CD4-positive, alpha-beta T cell (primary cell): ENCODE measurements at regions of chr9 and their contacts with region 1.

Region 1: DNA sequence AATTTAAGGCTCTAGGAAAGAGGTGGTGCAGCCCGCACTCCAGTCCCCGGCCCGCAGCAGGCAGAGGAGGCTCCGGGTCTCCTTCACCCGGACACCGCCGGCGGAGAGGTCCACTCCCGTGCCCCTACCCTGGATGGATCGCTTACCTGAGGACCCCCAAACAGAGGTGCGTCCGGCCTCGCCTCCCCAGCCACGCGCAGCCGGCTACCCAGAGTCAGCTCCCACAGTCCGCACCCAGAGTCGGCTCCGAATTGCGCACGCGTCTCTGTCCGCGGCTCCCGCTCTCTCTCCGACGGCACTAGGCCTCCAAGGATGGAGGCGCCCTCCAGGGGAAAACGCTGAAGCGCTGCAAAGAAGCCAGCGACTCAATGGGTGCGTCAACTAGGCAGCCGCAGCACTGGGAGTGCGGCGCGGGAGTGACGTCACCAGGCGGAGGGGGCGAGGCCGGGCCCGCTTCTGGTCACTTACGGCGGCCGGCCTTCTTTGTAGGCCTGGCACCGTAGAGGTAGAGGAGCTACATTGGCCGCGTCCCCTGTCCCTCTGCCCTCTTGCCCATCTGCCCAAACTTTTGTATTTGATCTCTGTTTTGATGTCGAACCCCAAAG is at the start of gene ELP1:
- DNase-seq: peak; percentile 83 to 97 (median 90)
- ATAC-seq: peak; percentile 88
- H3K4me3 ChIP-seq: peak within 1 kb of the TSS; percentile 97
- H3K4me3 Mint-ChIP-seq: peak within 1 kb of the TSS; percentile 99
- H3K27ac ChIP-seq: peak within 1 kb of the TSS; percentile 77 to 93
- H3K27ac Mint-ChIP-seq: peak within 1 kb of the TSS; percentile 95
- H3K4me1 ChIP-seq: peaks cover 23% of the 10 kb centered on the region
- H3K4me1 Mint-ChIP-seq: peaks cover 57% of the 10 kb centered on the region
- H3K27me3 ChIP-seq: no peaks in the 10 kb centered on the region
- H3K27me3 Mint-ChIP-seq: no peaks in the 10 kb centered on the region
- CTCF ChIP-seq: peak; percentile 39
- total RNA-seq, gene ELP1: 19.2 to 20.8 TPM

Region 2: DNA sequence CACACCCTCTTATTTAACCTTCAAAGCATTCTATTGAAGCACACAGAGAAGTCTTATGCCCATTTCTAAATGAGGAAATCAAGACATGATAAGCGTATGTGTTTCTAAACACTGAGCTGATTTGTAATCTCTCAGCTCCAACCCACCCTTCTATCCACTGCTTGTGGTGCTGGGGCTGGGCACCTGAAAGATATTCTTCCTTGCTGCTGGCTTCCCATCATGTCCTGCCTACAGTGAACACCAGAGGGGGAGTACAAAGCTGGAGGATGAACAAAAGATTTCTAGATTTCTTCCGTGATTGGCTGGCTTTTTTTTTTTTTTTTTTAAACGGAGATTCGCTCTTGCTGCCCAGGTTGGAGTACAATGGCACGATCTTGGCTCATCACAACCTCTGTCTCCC is 57.4 kb before region 1 on chr9:
- CTCF ChIA-PET with region 1: no interaction called
- POLR2A ChIA-PET with region 1: no interaction called
- intact Hi-C with region 1: no loop called
- DNase-seq: no peak
- ATAC-seq: no peak
- H3K4me3 ChIP-seq: no peak overlapping the region
- H3K4me3 Mint-ChIP-seq: no peak overlapping the region
- H3K27ac ChIP-seq: no peak overlapping the region
- H3K27ac Mint-ChIP-seq: no peak overlapping the region
- H3K4me1 ChIP-seq: no peaks in the 10 kb centered on the region
- H3K4me1 Mint-ChIP-seq: no peaks in the 10 kb centered on the region
- H3K27me3 ChIP-seq: no peaks in the 10 kb centered on the region
- H3K27me3 Mint-ChIP-seq: no peaks in the 10 kb centered on the region
- CTCF ChIP-seq: no peak

Region 3: DNA sequence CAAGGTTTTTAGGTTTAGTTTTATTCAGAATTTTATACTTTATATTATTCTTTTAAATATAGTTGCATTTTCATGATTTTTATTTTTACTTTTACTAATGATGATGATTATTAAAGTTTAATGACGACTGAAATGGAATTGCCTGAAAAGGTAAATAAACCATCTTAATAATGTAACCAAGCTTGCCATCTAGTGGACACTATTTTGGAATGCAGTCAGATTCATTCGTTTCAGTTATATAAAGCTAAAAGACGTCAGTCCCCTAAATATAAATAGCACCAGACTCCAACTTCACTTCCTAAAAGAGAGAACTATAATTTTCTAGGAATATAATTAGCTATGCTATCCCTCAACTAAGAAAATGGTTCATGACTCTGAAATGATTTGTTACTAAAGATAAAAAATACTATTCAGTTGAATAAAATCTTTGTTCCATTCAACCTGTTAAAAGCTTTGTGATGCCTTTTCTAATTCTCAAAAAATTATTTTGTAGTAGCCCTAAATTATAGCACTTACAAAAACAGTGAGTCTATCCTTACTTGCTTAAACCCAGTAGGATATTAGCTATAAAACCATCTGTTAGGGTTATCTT is 20.3 kb after region 1 on chr9:
- CTCF ChIA-PET with region 1: no interaction called
- POLR2A ChIA-PET with region 1: interaction called, 4 read pairs
- intact Hi-C with region 1: loop called in 1 of 2 experiments (anchors 1 kb)
- DNase-seq: peak in 3 of 14 experiments; percentile 49 to 65 (median 62)
- ATAC-seq: no peak
- H3K4me3 ChIP-seq: no peak overlapping the region
- H3K4me3 Mint-ChIP-seq: no peak overlapping the region
- H3K27ac ChIP-seq: no peak overlapping the region
- H3K27ac Mint-ChIP-seq: no peak overlapping the region
- H3K4me1 ChIP-seq: no peaks in the 10 kb centered on the region
- H3K4me1 Mint-ChIP-seq: no peaks in the 10 kb centered on the region
- H3K27me3 ChIP-seq: no peaks in the 10 kb centered on the region
- H3K27me3 Mint-ChIP-seq: no peaks in the 10 kb centered on the region
- CTCF ChIP-seq: peak; percentile 72

Region 4: GRCh38 chr9:109012876-109013678 is 79.3 kb after region 1 on chr9 and contains the start of gene CTNNAL1:
- CTCF ChIA-PET with region 1: no interaction called
- POLR2A ChIA-PET with region 1: interaction called, 3 read pairs
- intact Hi-C with region 1: loop called (anchors 2 to 5 kb)
- DNase-seq: peak; percentile 68 to 95 (median 85)
- ATAC-seq: peak; percentile 82
- H3K4me3 ChIP-seq: peak within 1 kb of the TSS; percentile 65
- H3K4me3 Mint-ChIP-seq: peak within 1 kb of the TSS; percentile 100
- H3K27ac ChIP-seq: peak within 1 kb of the TSS; percentile 43 to 65
- H3K27ac Mint-ChIP-seq: peak within 1 kb of the TSS; percentile 88
- H3K4me1 ChIP-seq: peaks cover 16% of the 10 kb centered on the region
- H3K4me1 Mint-ChIP-seq: peaks cover 32% of the 10 kb centered on the region
- H3K27me3 ChIP-seq: no peaks in the 10 kb centered on the region
- H3K27me3 Mint-ChIP-seq: peaks cover 10% of the 10 kb centered on the region
- CTCF ChIP-seq: no peak
- total RNA-seq, gene CTNNAL1: 4.9 to 5.3 TPM

Region 5: DNA sequence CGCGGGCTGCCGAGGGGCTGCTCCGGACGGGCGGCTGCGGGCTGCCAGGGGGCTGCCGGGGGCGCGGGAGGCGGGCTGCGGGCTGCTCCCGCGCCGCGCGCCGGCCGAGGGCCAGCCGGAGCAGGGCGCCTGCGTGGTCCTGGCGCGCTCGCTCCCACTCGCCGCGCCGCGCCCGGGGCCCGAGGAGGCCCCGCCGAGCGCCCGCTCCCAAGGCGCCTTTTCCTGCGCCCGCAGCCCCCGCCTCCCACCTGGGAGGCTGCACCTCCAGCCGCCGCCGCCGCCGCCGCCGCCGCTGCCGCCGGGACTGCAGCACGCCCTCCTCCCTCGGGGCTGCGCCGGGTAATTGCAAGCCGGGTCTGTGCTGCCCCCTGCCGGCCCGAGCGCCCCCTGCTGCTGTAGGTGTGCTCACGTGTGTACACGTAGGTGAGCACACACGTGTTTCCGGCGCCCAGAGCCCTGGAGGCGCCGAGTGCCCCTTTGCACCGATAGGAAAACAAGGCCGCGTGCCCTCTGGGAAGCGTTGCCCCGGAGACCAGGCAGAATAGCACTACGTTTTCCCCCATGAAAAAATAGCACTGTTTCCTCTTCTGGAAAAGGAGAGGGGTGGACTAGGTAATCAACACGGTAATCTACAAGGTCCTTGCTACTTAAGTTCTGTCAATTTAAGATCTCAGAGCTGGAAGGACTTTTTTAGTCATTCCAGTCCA is 387.1 kb after region 1 on chr9 and contains the start of gene EPB41L4B:
- CTCF ChIA-PET with region 1: no interaction called
- POLR2A ChIA-PET with region 1: no interaction called
- intact Hi-C with region 1: loop called in 1 of 2 experiments (anchors 5 kb)
- DNase-seq: peak; percentile 77 to 89 (median 82)
- ATAC-seq: peak; percentile 98
- H3K4me3 ChIP-seq: no peak within 1 kb of the TSS
- H3K4me3 Mint-ChIP-seq: peak within 1 kb of the TSS; percentile 86
- H3K27ac ChIP-seq: no peak within 1 kb of the TSS
- H3K27ac Mint-ChIP-seq: no peak within 1 kb of the TSS
- H3K4me1 ChIP-seq: peaks cover 12% of the 10 kb centered on the region
- H3K4me1 Mint-ChIP-seq: peaks cover 15% of the 10 kb centered on the region
- H3K27me3 ChIP-seq: peaks cover 42 to 49% of the 10 kb centered on the region in 2 experiments
- H3K27me3 Mint-ChIP-seq: peaks cover 73% of the 10 kb centered on the region
- CTCF ChIP-seq: peak; percentile 73
- total RNA-seq, gene EPB41L4B: not detected

Region 6: DNA sequence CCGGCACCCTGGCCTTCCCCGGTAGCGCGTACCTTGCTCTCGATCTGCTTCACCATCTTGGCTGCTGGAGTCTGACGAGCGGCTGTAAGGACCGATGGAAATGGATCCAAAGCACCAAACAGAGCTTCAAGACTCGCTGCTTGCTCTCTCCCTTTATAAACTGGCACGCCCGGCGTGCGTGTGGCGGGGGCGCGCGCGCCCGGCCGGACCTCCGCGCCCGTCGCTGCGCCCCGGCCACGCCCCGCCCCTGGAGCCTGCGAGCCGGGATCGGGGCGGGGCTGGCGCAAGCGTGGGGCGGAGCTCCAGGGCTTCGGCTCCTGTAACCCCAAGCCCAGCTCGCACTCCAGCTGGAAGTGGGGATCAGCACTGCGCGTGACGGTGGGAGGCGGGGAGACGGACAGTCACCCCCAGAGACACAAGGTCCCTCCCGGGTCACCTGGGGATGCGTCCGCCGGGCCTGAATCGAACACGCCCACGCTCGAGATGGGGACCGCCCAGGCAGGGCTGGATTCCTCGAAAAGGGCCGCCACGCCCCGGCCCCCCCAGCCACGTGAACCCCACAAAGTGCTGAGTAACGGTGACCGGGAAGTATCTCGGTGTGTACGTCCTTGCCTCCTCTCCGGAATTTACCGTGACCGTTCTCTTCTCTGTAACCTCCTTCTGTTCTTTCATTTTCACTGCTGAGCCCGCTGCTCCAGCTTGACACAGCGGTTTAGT is 1322.7 kb after region 1 on chr9 and contains the start of gene TXN:
- CTCF ChIA-PET with region 1: no interaction called
- POLR2A ChIA-PET with region 1: no interaction called
- intact Hi-C with region 1: loop called in 1 of 2 experiments (anchors 10 kb)
- DNase-seq: peak; percentile 59 to 91 (median 77)
- ATAC-seq: peak; percentile 78
- H3K4me3 ChIP-seq: peak within 1 kb of the TSS; percentile 85
- H3K4me3 Mint-ChIP-seq: peak within 1 kb of the TSS; percentile 98
- H3K27ac ChIP-seq: peak within 1 kb of the TSS; percentile 37 to 63
- H3K27ac Mint-ChIP-seq: peak within 1 kb of the TSS; percentile 83
- H3K4me1 ChIP-seq: peaks cover 32% of the 10 kb centered on the region
- H3K4me1 Mint-ChIP-seq: peaks cover 44% of the 10 kb centered on the region
- H3K27me3 ChIP-seq: no peaks in the 10 kb centered on the region
- H3K27me3 Mint-ChIP-seq: no peaks in the 10 kb centered on the region
- CTCF ChIP-seq: no peak
- total RNA-seq, gene TXN: 31.5 to 35.1 TPM